ENCODE measurements at regions of chr16 and their contacts with region 1.

Region 1: DNA sequence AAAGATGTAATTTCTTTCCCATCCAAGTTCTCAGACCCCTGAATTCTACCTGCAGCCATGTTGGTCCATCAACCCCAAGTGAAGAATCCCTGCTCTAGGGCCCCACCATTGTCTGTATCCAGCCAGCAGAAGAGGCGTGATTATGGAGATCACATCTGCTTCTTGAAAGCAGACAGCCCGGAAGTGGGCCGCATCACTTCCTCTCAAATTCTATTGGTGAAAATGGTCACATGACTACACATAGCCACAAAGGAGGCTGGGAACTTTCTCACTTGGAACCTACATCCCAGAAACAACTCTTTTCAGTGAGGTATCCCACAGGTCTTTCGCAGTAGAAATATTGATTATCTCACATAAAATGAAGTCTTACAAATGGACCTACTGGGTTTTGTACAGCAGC is 40.1 kb downstream of the IL4R start:
- DNase-seq: no peak
- H3K4me3 ChIP-seq: no peak overlapping the region
- H3K27ac ChIP-seq: no peak overlapping the region
- H3K4me1 ChIP-seq: no peaks in the 10 kb centered on the region
- H3K27me3 ChIP-seq: no peaks in the 10 kb centered on the region
- CTCF ChIP-seq: no peak

Region 2: DNA sequence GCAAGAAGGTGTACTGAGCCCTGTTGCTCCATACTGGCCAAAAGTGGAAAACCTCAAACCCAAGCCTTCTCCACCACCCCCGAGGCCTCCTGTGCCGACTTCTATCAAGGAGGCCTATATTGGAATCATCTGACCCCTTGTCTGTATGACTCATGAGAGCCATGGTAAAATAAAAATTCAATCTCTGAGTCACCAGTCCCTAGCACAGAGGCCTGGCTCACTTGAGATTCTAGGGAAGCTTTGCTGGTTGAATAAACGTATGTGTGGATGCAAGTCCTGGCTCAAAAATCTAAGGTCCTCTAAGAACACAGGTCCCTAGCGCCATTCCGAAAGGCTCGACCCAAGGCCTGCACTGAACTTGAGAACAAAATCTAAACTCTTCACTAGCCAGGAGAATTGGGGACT is 100.3 kb before region 1 on chr16:
- CTCF ChIA-PET with region 1: no interaction called
- dilution Hi-C with region 1: loop called (anchors 5 kb)
- in situ Hi-C with region 1: no loop called
- intact Hi-C with region 1: no loop called
- DNase-seq: peak; percentile 85
- H3K4me3 ChIP-seq: no peak overlapping the region
- H3K27ac ChIP-seq: peak overlapping the region; percentile 31
- H3K4me1 ChIP-seq: peaks cover 37% of the 10 kb centered on the region
- H3K27me3 ChIP-seq: no peaks in the 10 kb centered on the region
- CTCF ChIP-seq: no peak

Region 3: GRCh38 chr16:27401768-27402568 is 48.1 kb after region 1 on chr16 and contains the start of gene IL21R:
- CTCF ChIA-PET with region 1: no interaction called
- dilution Hi-C with region 1: no loop called
- in situ Hi-C with region 1: no loop called
- intact Hi-C with region 1: no loop called
- DNase-seq: no peak
- H3K4me3 ChIP-seq: no peak within 1 kb of the TSS
- H3K27ac ChIP-seq: no peak within 1 kb of the TSS
- H3K4me1 ChIP-seq: no peaks in the 10 kb centered on the region
- H3K27me3 ChIP-seq: no peaks in the 10 kb centered on the region
- CTCF ChIP-seq: no peak
- total RNA-seq, gene IL21R: 0.17 to 0.64 TPM